Right ventricle myocardium inferior (tissue), 1 donor: ENCODE measurements at regions of chr17 and their contacts with region 1.

Region 1: GRCh38 chr17:67891581-67892054 is 66.3 kb downstream of the BPTF start:
- DNase-seq: no peak
- ATAC-seq: no peak

Region 2: GRCh38 chr17:67824735-67825626 is 66.6 kb before region 1 on chr17 and contains the start of gene BPTF:
- intact Hi-C with region 1: loop called (anchors 2 kb)
- DNase-seq: peak; percentile 97
- ATAC-seq: peak; percentile 98
- total RNA-seq, gene BPTF: 72.5 TPM